A673 (cell line): ENCODE measurements at regions of chr1 and their contacts with region 1.

Region 1: DNA sequence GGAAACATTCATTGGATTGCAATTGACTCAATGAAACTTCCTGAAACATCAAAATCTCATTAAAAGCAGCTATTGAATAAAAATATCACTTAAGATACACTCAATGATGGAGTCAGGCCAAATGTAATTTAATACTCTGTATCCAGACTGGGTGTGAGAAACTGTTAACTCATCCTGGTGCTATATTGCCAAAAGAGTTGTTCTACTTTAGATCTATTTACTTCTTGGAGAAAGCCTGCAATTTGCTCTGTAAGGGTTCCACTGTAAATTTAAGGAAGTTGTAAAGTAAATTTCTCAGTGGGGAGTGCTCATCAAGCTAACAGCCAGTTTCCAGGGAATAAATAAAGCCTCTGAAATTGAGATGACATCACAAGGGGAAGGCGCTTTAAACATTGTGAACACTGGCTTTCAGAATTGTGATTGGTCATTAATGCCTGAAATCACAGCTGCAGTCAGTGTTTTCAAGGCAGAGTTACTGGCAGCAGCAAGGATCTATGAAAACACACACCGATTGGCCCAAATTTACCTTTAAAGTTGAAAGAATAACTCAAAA is 91.4 kb downstream of the OLFM3 start:
- DNase-seq: peak; percentile 99
- H3K4me3 ChIP-seq: peak overlapping the region; percentile 17
- H3K27ac ChIP-seq: peak overlapping the region; percentile 70
- H3K4me1 ChIP-seq: peaks cover 74% of the 10 kb centered on the region
- H3K27me3 ChIP-seq: no peaks in the 10 kb centered on the region
- CTCF ChIP-seq: no peak

Region 2: DNA sequence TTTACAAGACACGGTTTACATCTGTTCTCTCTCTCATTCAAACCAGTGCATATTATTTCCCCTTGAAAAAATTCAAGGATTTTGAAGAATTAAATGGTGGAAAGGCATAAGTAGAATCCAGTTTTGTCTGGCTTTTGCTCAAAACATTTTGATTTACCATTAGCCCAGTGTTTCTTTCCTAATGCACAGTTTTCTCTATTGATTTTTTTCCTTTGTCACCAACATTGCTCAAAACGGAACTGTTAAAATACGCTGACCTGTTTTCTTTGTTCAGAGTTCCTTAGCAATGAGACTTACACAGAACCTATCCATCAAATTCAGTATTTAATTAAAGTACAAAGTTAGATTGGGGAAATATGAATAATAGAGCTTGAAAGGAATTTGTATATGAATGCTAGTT is 506.1 kb before region 1 on chr1:
- CTCF ChIA-PET with region 1: no interaction called
- POLR2A ChIA-PET with region 1: no interaction called
- intact Hi-C with region 1: no loop called
- DNase-seq: no peak
- H3K4me3 ChIP-seq: no peak overlapping the region
- H3K27ac ChIP-seq: no peak overlapping the region
- H3K4me1 ChIP-seq: no peaks in the 10 kb centered on the region
- H3K27me3 ChIP-seq: no peaks in the 10 kb centered on the region
- CTCF ChIP-seq: no peak

Region 3: GRCh38 chr1:101971304-101971703 is 65.9 kb after region 1 on chr1:
- CTCF ChIA-PET with region 1: interaction called, 11 read pairs
- POLR2A ChIA-PET with region 1: no interaction called
- intact Hi-C with region 1: no loop called
- DNase-seq: peak; percentile 68
- H3K4me3 ChIP-seq: no peak overlapping the region
- H3K27ac ChIP-seq: peak overlapping the region; percentile 40
- H3K4me1 ChIP-seq: peaks cover 41% of the 10 kb centered on the region
- H3K27me3 ChIP-seq: no peaks in the 10 kb centered on the region
- CTCF ChIP-seq: peak; percentile 77

Region 4: DNA sequence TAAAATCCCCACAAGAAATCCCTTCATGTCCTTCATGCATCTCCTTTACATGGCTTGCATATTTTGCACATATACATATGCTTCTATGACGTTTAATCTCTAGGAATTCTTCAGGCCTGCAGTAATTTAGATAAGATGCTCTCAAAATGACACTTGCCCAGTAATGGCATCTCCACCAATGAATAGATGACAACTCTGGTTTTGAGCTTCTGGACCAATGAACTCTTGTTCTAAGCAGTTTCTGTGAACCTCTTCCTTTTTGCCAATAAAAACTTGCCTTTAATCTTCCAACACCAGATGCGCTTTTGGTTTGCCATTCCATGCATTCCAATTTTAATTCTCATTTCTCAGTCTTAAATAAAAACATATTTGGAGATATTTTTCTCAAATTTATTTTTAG is 281.2 kb after region 1 on chr1:
- CTCF ChIA-PET with region 1: no interaction called
- POLR2A ChIA-PET with region 1: no interaction called
- intact Hi-C with region 1: loop called (anchors 2 kb)
- DNase-seq: peak; percentile 52
- H3K4me3 ChIP-seq: no peak overlapping the region
- H3K27ac ChIP-seq: peak overlapping the region; percentile 97
- H3K4me1 ChIP-seq: peaks cover 77% of the 10 kb centered on the region
- H3K27me3 ChIP-seq: no peaks in the 10 kb centered on the region
- CTCF ChIP-seq: no peak